ENCODE measurements at regions of chr17 and their contacts with region 1.

Region 1: DNA sequence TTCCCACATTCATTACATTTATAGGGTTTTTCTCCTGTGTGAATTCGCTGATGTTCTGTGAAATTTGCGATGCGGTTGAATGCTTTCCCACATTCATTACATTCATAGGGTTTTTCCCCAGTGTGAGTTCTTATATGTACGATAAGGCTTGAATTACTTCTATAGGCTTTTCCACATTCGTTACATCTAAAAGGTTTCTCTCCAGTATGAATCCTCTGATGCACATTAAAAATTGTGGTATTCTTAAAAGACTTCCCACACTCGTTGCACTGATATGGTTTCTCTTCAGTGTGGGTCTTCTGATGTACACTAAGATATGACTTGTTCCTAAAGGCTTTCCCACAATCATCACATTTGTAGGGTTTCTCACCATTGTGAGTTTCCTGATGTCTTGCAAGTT is 30.4 kb downstream of the ZNF624 start:
- DNase-seq: no peak
- H3K4me3 ChIP-seq: no peak overlapping the region
- H3K27ac ChIP-seq: no peak overlapping the region
- H3K4me1 ChIP-seq: no peaks in the 10 kb centered on the region
- H3K27me3 ChIP-seq: no peaks in the 10 kb centered on the region
- CTCF ChIP-seq: no peak
- POLR2A ChIP-seq: no peak

Region 2: DNA sequence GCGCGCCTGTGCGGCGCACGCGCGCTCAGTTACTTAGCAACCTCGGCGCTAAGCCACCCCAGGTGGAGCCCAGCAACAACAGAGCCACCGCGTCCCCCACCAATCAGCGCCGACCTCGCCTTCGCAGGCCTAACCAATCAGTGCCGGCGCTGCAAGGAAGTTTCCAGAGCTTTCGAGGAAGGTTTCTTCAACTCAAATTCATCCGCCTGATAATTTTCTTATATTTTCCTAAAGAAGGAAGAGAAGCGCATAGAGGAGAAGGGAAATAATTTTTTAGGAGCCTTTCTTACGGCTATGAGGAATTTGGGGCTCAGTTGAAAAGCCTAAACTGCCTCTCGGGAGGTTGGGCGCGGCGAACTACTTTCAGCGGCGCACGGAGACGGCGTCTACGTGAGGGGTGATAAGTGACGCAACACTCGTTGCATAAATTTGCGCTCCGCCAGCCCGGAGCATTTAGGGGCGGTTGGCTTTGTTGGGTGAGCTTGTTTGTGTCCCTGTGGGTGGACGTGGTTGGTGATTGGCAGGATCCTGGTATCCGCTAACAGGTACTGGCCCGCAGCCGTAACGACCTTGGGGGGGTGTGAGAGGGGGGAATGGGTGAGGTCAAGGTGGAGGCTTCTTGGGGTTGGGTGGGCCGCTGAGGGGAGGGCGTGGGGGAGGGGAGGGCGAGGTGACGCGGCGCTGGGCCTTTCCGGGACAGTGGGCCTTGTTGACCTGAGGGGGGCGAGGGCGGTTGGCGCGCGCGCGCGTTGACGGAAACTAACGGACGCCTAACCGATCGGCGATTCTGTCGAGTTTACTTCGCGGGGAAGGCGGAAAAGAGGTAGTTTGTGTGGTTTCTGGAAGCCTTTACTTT is 242.4 kb before region 1 on chr17 and contains the start of gene UBB:
- intact Hi-C with region 1: no loop called
- DNase-seq: peak in 1 of 2 donors; percentile 95
- H3K4me3 ChIP-seq: peak within 1 kb of the TSS; percentile 67 to 75
- H3K27ac ChIP-seq: peak within 1 kb of the TSS; percentile 100
- H3K4me1 ChIP-seq: peaks cover 44% of the 10 kb centered on the region
- H3K27me3 ChIP-seq: no peaks in the 10 kb centered on the region
- CTCF ChIP-seq: no peak
- POLR2A ChIP-seq: peak in 1 of 2 donors; percentile 97
- total RNA-seq, gene UBB: 625 TPM

Region 3: DNA sequence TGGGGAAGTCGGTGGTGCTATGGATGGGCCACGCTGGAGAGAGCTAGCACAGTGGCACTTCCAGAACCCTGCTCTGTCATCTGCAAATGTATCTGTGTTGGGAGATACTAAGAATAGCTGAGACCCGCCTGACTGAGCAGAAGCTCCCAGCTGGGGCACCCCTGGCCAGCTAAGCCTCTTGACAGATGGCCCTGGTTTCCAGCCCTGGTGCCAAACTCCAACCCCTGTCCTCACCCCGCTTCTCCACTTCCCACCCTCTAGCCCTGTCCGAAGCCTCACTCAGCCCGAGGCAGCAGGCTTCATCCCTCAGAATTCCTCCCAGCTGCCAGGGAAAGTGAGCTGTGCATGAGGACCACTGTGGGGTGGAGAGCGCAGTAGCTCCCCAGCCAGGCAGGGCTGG is 191.2 kb after region 1 on chr17:
- intact Hi-C with region 1: no loop called
- DNase-seq: no peak
- H3K4me3 ChIP-seq: no peak overlapping the region
- H3K27ac ChIP-seq: no peak overlapping the region
- H3K4me1 ChIP-seq: no peaks in the 10 kb centered on the region
- H3K27me3 ChIP-seq: no peaks in the 10 kb centered on the region
- CTCF ChIP-seq: no peak
- POLR2A ChIP-seq: no peak

Region 4: DNA sequence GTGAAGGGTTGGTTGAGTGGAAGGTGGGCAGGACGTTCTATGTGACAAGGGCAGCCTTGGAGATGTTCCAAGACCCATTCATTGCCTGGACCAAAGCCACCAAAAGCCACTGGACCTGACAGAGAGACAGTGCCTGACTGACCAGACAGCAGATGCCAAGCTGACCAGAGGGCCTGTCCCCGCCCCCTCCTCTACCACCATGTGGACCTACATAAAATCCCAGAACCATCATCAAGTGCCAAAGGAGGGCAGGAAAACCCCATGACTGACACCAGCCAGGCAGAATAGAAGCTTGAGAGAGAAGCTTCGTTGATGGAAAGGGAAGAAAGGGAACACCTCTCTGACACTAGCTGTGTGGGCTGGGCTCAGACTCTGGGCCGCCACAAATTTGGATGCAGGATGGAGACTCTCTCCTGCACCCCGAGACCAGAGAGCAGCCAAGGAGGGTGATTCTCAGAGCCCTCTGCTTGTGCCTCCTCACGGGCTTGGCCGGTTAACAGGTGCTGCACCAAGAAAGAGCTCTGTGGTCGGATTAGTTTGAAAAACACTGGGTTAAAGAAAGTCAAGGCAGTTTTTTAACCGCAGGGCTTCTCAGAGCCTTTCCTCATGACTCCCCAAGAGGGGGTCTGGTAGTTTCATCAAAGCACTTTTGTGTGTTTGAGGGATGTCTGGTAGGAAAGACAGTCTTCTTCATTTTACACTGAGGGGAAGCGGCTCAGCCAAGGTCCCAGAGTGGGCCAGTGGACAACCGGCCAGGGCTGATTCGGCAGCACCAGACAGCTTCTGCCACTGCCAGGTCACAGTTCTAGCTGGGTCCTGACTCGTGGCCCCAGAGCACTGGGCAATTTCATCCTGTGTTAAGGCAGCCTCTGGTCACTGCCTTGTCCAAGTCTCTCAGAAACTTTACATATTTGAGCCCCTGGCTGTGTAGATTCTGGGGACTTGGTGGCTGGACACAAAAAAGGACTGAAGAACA is 346.9 kb after region 1 on chr17:
- intact Hi-C with region 1: loop called (anchors 5 kb)
- DNase-seq: no peak
- H3K4me3 ChIP-seq: no peak overlapping the region
- H3K27ac ChIP-seq: no peak overlapping the region
- H3K4me1 ChIP-seq: no peaks in the 10 kb centered on the region
- H3K27me3 ChIP-seq: no peaks in the 10 kb centered on the region
- CTCF ChIP-seq: no peak
- POLR2A ChIP-seq: no peak

Measured in vagina (tissue), 2 donors.